Activated naive CD4-positive, alpha-beta T cell treated with anti-CD3 and anti-CD28 coated beads for 36 hours (primary cell): ENCODE measurements at regions of chr20 and their contacts with region 1.

Region 1: DNA sequence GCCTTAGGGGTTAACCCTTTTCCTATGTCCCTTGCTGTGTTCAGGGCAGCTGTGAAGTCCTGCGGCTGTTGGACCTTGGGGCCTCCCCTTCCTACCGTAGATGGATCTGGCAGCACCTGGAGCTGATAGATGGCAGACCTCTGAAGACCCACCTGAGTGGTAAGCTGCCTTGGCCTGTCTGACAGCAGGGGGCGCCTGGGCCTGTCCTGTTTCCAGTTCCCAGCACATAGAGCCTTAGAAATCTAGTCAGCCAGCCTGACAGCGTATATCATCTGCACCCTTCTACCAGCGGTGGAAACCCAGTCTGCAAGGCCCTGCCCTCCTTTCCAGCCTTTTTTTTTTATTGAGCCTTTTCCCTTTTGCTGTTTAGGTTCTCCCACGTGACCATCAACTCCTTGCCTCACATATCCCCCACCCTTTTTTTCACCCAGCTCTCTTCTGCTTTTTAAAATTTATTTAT is 26.6 kb downstream of the CNBD2 start:
- DNase-seq: peak; percentile 89
- H3K4me3 Mint-ChIP-seq: no peak overlapping the region
- H3K27ac Mint-ChIP-seq: no peak overlapping the region
- H3K4me1 Mint-ChIP-seq: peaks cover 2% of the 10 kb centered on the region
- H3K27me3 Mint-ChIP-seq: no peaks in the 10 kb centered on the region

Region 2: DNA sequence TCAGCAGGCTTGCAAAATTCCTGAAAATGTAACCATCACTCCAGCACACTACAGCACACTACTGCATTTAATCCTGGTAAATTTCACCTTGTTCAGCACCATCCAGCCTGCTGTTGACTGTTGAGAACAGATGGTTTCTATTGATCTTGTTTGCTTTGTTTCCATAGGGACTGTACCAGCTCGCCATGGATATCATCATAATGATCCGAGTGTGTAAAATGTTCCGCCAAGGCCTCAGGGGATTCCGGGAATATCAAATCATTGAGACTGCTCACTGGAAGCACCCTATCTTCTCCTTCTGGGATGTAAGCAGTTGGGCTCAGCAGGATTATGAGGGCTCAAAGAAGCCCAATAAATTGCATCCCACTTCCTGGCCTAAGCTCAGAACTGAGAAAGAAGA is 22.6 kb before region 1 on chr20:
- CTCF ChIA-PET with region 1: interaction called, 73 read pairs
- intact Hi-C with region 1: no loop called
- DNase-seq: no peak
- H3K4me3 Mint-ChIP-seq: no peak overlapping the region
- H3K27ac Mint-ChIP-seq: no peak overlapping the region
- H3K4me1 Mint-ChIP-seq: no peaks in the 10 kb centered on the region
- H3K27me3 Mint-ChIP-seq: no peaks in the 10 kb centered on the region

Region 3: DNA sequence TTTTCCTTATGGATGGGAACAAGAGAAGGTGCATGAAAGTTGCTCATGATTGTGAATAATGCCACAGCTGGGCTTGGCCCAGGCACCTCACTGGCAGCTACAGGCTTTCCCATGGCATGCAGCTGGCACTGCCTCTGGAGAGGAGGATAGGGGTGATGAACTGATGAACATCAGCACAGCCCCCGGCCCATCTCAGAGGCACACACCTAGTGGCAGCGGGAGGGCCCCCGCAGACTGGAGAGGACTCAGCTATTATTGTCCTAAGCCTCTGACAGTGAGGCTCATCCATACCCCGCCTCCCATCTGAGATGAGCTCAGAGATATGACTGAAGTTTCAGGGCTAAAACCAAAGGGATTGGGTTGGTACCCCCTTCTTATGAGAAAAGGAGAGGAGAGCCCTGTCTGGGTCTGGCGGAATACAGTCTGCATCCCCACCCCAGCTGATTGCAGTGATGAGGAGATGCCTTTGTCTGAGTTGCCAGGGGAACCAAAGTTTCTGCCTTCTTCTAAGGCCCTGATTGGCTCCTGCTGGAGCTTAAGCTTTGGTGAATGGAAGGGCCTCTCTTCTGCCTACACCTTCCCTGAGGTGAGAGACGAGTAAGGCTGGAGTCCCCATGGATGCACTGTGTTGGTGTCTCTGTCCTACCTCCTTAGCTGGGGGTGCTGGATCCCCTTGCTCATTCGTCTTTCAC is 132.0 kb after region 1 on chr20:
- CTCF ChIA-PET with region 1: interaction called, 263 read pairs
- intact Hi-C with region 1: no loop called
- DNase-seq: no peak
- H3K4me3 Mint-ChIP-seq: no peak overlapping the region
- H3K27ac Mint-ChIP-seq: no peak overlapping the region
- H3K4me1 Mint-ChIP-seq: no peaks in the 10 kb centered on the region
- H3K27me3 Mint-ChIP-seq: no peaks in the 10 kb centered on the region

Region 4: DNA sequence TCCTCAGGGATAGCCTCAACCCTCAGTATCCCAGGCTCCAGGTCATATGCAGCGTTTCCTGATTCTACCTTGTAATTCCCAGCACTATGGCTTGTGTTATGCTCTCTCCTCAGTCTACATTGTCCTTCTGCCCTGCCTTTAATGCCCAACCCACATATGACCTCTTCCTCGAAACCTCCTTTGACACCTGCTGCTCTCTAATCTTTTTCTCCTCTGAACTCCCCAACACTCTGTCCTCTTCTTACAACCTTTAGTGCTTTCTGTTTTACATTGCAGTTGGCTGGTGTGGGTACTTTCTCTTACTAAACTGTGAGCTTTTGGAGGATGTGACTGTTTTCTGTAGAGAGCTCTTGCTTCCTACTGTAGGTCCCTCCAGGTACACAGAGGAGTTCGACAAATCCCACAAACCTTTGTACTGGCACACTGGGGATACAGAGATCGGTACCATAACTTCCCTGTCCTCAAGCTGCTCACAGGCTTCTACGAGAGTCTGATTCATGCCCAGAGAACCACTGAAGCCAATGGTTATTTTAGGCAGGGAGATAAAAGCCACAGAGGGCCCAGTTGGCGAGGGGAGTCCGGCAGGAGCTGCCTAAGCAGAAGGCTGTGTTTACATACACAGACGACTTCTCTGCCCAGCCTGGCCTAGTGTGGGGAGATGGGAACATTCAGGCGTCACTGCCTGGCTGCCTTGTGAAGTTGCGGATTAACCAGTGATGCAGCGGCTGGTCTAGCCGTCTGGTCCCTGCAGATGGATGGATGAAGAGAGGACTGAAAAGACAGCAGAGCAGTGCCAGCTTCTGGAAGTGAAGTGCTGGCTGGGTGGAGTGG is 151.1 kb after region 1 on chr20:
- CTCF ChIA-PET with region 1: interaction called, 263 read pairs
- intact Hi-C with region 1: no loop called
- DNase-seq: no peak
- H3K4me3 Mint-ChIP-seq: no peak overlapping the region
- H3K27ac Mint-ChIP-seq: no peak overlapping the region
- H3K4me1 Mint-ChIP-seq: no peaks in the 10 kb centered on the region
- H3K27me3 Mint-ChIP-seq: no peaks in the 10 kb centered on the region

Region 5: GRCh38 chr20:36199345-36200257 is 204.6 kb after region 1 on chr20:
- CTCF ChIA-PET with region 1: interaction called, 50 read pairs
- intact Hi-C with region 1: loop called (anchors 1 kb)
- DNase-seq: peak; percentile 89
- H3K4me3 Mint-ChIP-seq: no peak overlapping the region
- H3K27ac Mint-ChIP-seq: no peak overlapping the region
- H3K4me1 Mint-ChIP-seq: peaks cover 4% of the 10 kb centered on the region
- H3K27me3 Mint-ChIP-seq: no peaks in the 10 kb centered on the region